ENCODE measurements at regions of chr2 and their contacts with region 1.

Region 1: GRCh38 chr2:238835726-238836301 is 12.1 kb upstream of the TWIST2 start:
- DNase-seq: no peak
- H3K4me3 ChIP-seq: no peak overlapping the region
- H3K27ac ChIP-seq: no peak overlapping the region
- H3K4me1 ChIP-seq: no peaks in the 10 kb centered on the region
- H3K27me3 ChIP-seq: no peaks in the 10 kb centered on the region
- CTCF ChIP-seq: no peak
- POLR2A ChIP-seq: no peak

Region 2: DNA sequence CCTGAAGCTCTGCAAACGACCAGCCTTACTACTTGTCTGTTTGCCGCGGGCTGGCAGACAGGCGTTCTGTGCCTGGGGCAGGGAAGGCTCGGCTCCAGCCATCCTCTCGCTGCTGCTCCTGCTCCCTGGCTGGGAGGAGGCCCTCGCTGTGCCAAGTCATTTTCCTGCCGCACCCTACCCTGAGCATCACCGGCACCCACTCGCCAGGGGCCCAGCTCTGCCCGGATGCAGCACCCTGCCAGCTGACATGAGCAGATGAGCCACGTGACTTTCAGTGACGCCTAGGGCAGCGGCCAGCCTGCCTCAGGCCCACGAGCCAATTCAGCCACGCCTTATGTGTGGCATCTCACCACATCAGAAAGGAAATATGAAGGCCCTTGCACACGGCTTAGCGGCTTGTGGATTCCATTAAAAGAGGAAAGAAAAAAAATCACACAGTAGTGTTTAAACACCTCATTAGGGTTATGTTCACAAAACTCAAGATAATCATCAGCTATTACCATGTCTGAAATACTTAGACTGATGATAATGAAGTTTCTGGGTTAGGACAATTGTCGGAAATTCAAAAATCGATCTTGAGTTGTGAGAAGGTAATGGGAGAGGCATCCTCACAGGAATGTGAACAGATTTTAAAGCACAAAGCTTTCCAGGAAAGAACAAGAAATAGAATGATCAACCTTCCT is 262.6 kb after region 1 on chr2:
- intact Hi-C with region 1: loop called (anchors 10 kb)
- DNase-seq: no peak
- H3K4me3 ChIP-seq: no peak overlapping the region
- H3K27ac ChIP-seq: no peak overlapping the region
- H3K4me1 ChIP-seq: no peaks in the 10 kb centered on the region
- H3K27me3 ChIP-seq: no peaks in the 10 kb centered on the region
- CTCF ChIP-seq: no peak
- POLR2A ChIP-seq: no peak

Measured in vagina (tissue), 2 donors.